GM12878 (cell line): ENCODE measurements at regions of chr1 and their contacts with region 1.

Region 1: DNA sequence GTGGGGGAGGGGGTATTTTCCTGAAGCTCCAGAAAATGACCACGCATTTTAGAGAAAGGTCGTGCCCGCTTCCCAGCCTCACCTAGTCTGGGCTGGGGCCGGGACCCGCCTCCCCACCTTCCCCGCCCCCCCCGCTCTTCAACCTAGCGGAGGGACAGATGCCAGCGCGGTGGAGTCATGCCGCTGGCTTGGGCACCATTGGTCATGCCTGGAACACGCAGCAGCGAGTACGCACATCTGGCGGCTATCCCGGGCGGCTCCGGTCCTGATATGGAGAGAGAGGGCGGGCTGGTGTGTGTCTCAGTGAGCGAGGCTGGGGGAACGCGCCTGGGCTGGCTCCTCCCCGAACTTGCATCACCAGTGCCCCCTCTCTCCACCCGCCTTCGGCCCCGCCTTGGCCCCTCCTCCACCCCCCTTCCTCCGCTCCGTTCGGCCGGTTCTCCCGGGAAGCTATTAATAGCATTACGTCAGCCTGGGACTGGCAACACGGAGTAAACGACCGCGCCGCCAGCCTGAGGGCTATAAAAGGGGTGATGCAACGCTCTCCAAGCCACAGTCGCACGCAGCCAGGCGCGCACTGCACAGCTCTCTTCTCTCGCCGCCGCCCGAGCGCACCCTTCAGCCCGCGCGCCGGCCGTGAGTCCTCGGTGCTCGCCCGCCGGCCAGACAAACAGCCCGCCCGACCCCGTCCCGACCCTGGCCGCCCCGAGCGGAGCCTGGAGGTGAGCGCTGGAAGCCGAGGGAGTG is at the start of gene ATF3:
- DNase-seq: peak; percentile 94
- ATAC-seq: peak; percentile 80
- H3K4me3 ChIP-seq: peak within 1 kb of the TSS; percentile 87
- H3K27ac ChIP-seq: peak within 1 kb of the TSS; percentile 62
- H3K4me1 ChIP-seq: peaks cover 19% of the 10 kb centered on the region
- H3K27me3 ChIP-seq: peaks cover 0 to 6% of the 10 kb centered on the region in 2 experiments; a peak in 1 of 4 replicates
- CTCF ChIP-seq: no peak
- EP300 ChIP-seq: peak in 1 of 2 experiments; percentile 9; a peak in 1 of 4 replicates
- POLR2A ChIP-seq: peak; percentile 99
- RAD21 ChIP-seq: no peak
- polyA plus RNA-seq, gene ATF3: 3.0 to 3.4 TPM

Region 2: GRCh38 chr1:212247179-212247721 is 361.1 kb before region 1 on chr1:
- CTCF ChIA-PET with region 1: no interaction called
- POLR2A ChIA-PET with region 1: no interaction called
- RAD21 ChIA-PET with region 1: no interaction called
- SMC1A ChIA-PET with region 1: no interaction called
- in situ Hi-C with region 1: no loop called
- intact Hi-C with region 1: no loop called
- DNase-seq: no peak
- ATAC-seq: no peak
- H3K4me3 ChIP-seq: no peak overlapping the region
- H3K27ac ChIP-seq: no peak overlapping the region
- H3K4me1 ChIP-seq: no peaks in the 10 kb centered on the region
- H3K27me3 ChIP-seq: no peaks in the 10 kb centered on the region
- CTCF ChIP-seq: no peak
- EP300 ChIP-seq: no peak
- POLR2A ChIP-seq: no peak
- RAD21 ChIP-seq: no peak

Region 3: DNA sequence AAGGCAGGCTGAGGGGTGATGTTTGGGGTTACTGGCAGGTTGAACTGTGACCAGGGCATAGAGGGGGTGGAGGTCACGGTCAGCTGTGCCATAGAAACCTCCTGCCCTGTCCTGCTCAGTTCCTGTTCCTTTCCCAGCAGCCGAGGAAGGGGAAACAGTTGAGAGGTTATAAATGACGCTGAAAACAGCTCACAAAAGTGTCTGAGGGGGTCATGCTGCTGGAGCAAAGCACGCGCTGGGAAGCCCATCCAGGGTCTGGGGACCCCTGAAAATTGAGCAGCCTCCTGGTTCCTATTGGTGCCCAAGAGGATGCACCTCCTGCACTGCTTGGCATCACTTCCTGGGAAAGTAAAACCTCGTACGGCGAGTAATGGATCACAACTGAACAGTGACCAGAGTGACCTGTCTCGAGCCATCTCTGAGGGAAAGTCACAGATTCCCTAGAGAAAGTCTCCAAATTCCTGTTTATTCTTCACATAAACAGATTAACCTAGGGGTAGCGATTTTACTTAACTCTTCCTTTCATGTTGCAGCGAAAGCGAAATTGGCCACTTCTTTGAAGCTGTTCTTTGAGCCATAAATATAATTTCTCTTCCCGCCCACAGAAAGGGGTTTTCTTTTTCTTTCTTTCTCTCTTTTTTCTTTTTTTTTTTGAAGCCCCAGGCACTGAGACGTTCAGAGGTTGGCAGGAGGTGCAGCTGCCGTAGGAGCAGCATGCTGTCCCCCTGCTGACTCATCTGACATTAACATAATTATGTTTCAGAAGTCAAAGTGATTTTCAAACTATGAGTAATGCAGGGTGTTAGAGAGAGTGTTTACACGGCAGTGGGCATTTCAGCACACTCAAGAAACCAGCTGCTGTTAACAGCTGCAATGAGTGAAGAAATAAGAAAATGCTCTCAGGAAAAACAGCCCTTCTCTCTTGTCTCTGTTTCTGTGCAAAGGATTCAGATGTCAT is 41.6 kb before region 1 on chr1:
- CTCF ChIA-PET with region 1: interaction called, 4 read pairs
- POLR2A ChIA-PET with region 1: interaction called, 25 read pairs
- RAD21 ChIA-PET with region 1: interaction called, 10 read pairs
- SMC1A ChIA-PET with region 1: interaction called, 11 read pairs
- in situ Hi-C with region 1: no loop called
- intact Hi-C with region 1: loop called (anchors 1 kb)
- DNase-seq: peak; percentile 92
- ATAC-seq: peak; percentile 98
- H3K4me3 ChIP-seq: peak overlapping the region; percentile 58
- H3K27ac ChIP-seq: peak overlapping the region; percentile 72
- H3K4me1 ChIP-seq: peaks cover 20% of the 10 kb centered on the region
- H3K27me3 ChIP-seq: no peaks in the 10 kb centered on the region
- CTCF ChIP-seq: no peak
- EP300 ChIP-seq: peak; percentile 93
- POLR2A ChIP-seq: 0 out of 2 replicates have a peak, but pooled peaks have one; percentile 27
- RAD21 ChIP-seq: no peak

Region 4: GRCh38 chr1:212595787-212596714 is 12.3 kb before region 1 on chr1:
- CTCF ChIA-PET with region 1: interaction called, 20 read pairs
- POLR2A ChIA-PET with region 1: interaction called, 48 read pairs
- RAD21 ChIA-PET with region 1: interaction called, 30 read pairs
- SMC1A ChIA-PET with region 1: interaction called, 29 read pairs
- in situ Hi-C with region 1: no loop called
- intact Hi-C with region 1: loop called (anchors 1 kb)
- DNase-seq: peak; percentile 90
- ATAC-seq: peak; percentile 93
- H3K4me3 ChIP-seq: no peak overlapping the region
- H3K27ac ChIP-seq: peak overlapping the region; percentile 95
- H3K4me1 ChIP-seq: peaks cover 17% of the 10 kb centered on the region
- H3K27me3 ChIP-seq: no peaks in the 10 kb centered on the region
- CTCF ChIP-seq: peak; percentile 51 to 62 (median 61); a peak in 5 of 6 replicates
- EP300 ChIP-seq: peak; percentile 76 to 94
- POLR2A ChIP-seq: peak; percentile 39; the same call in 1 of the 2 replicates
- RAD21 ChIP-seq: peak; percentile 38

Region 5: GRCh38 chr1:212699104-212699624 is 90.8 kb after region 1 on chr1:
- CTCF ChIA-PET with region 1: interaction called, 4 read pairs
- POLR2A ChIA-PET with region 1: no interaction called
- RAD21 ChIA-PET with region 1: interaction called, 6 read pairs
- SMC1A ChIA-PET with region 1: interaction called, 6 read pairs
- in situ Hi-C with region 1: no loop called
- intact Hi-C with region 1: loop called (anchors 2 kb)
- DNase-seq: no peak
- ATAC-seq: peak; percentile 81
- H3K4me3 ChIP-seq: peak overlapping the region; percentile 82
- H3K27ac ChIP-seq: no peak overlapping the region
- H3K4me1 ChIP-seq: peaks cover 27% of the 10 kb centered on the region
- H3K27me3 ChIP-seq: no peaks in the 10 kb centered on the region
- CTCF ChIP-seq: peak; percentile 48 to 79 (median 71)
- EP300 ChIP-seq: no peak
- POLR2A ChIP-seq: no peak
- RAD21 ChIP-seq: peak; percentile 51

Region 6: GRCh38 chr1:212950243-212951125 is 342.1 kb after region 1 on chr1 and contains the start of gene VASH2:
- CTCF ChIA-PET with region 1: no interaction called
- POLR2A ChIA-PET with region 1: no interaction called
- RAD21 ChIA-PET with region 1: no interaction called
- SMC1A ChIA-PET with region 1: no interaction called
- in situ Hi-C with region 1: no loop called
- intact Hi-C with region 1: loop called (anchors 5 kb)
- DNase-seq: peak; percentile 59
- ATAC-seq: peak; percentile 92
- H3K4me3 ChIP-seq: peak within 1 kb of the TSS; percentile 95
- H3K27ac ChIP-seq: peak within 1 kb of the TSS; percentile 92
- H3K4me1 ChIP-seq: peaks cover 48% of the 10 kb centered on the region
- H3K27me3 ChIP-seq: no peaks in the 10 kb centered on the region
- CTCF ChIP-seq: no peak; a peak in 1 of 6 replicates
- EP300 ChIP-seq: no peak
- POLR2A ChIP-seq: peak; percentile 71
- RAD21 ChIP-seq: no peak
- polyA plus RNA-seq, gene VASH2: 5.4 to 6.5 TPM